Esophagus muscularis mucosa (tissue), 4 donors: ENCODE measurements at regions of chr2 and their contacts with region 1.

Region 1: DNA sequence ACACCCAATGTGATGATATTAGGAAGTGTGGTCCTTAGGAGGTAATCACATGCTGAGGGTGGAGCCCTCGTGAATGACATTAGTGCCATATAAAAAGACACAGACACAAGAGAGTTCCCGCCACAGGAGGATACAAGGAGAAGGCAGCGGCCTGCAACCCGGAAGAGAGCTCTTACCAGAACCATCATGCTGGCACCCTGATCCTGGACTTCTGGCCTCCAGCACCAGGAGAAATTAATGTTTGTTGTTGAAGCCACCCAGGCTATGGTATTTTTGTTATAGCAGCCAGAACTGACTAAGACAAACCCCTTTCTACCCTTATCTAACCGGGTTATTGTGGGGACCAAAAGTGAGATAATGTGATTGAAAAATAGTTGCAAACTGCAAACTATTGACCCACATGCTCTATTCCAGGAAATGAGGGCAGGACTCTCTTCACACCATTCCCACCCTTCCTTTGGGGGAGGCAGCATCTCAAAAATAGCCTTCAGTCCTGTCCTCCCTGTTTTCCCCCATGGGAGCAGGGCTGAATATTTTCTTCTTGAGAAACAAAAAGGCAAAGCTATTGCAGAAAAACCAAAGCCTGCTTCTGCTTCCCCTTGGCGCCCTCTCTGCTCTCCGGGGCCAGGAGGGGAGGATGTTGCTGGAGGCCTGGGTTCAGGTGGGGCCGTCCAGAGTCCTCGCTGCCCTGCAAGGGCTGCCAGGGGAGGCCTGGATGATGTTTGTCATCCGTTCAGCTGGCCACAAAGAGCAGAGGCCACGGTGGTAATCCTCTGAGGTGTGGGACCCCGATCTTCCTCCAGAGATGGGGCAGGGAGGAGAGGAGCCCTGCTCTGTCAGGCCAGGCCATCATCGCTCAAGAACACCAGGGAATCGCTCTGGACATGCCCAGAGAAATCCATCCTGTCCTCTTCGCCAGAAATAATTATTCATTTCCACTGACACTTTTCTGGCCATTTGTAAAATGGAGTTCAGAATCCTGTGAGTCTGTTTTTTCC is 73.8 kb upstream of the HAAO start:
- DNase-seq: no peak
- H3K4me3 ChIP-seq: no peak overlapping the region
- H3K27ac ChIP-seq: peak overlapping the region; percentile 73 to 82 (median 81)
- H3K4me1 ChIP-seq: peaks cover 16 to 43% (median 33%) of the 10 kb centered on the region in 4 donors
- H3K27me3 ChIP-seq: no peaks in the 10 kb centered on the region
- CTCF ChIP-seq: no peak
- EP300 ChIP-seq: no peak
- POLR2A ChIP-seq: no peak

Region 2: DNA sequence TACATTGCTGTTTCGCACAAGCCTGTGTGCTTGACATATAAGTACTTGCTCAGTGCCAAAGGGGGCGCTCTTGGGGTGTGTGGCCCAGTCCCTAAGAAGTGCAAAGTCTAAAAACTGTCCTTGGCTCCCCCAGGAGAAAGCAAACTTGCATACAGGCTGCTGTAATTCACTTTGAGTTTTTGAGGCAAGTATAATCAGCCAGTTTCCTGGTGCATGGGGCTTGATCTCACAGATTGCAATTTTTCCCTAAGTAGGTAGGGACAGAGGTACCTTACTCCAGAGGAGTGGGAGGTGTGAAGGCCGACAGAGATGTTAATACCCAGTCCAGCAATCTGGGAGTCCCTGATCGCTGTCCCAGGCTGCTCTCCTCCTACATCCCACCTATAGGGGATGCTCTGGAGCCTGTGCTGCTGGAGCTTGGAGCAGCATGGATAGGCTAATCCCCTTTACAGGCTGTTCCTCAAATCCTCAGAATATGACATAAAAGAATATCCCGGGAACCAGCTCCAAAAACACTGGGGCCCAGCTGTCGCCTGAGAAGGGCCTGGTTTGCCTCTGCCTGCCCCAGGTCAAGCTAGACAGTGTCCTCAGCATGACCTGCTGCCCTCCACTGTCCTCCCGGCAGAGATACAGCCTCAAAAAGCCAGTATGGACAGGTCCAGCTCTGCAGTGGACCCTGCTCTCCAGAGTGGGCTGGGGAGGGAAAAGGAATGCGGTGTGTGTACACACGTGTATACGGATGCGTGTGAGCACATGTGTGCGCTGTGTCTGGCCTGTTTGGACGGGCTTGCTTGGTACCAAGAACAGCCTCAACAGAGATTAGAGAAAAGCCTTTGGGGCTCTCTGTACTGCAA is 62.7 kb after region 1 on chr2:
- intact Hi-C with region 1: loop called (anchors 5 kb)
- DNase-seq: no peak
- H3K4me3 ChIP-seq: no peak overlapping the region
- H3K27ac ChIP-seq: peak overlapping the region; percentile 88 to 93 (median 90)
- H3K4me1 ChIP-seq: peaks cover 95 to 99% (median 97%) of the 10 kb centered on the region in 4 donors
- H3K27me3 ChIP-seq: no peaks in the 10 kb centered on the region
- CTCF ChIP-seq: peak in 2 of 3 experiments; percentile 15 to 38
- EP300 ChIP-seq: no peak
- POLR2A ChIP-seq: no peak